Activated CD8-positive, alpha-beta memory T cell treated with anti-CD3 and anti-CD28 coated beads, Interleukin-2, amount 10 ng/mL, durations not matched to agents 7 days and 5 days (primary cell): ENCODE measurements at regions of chr11 and their contacts with region 1.

Region 1: DNA sequence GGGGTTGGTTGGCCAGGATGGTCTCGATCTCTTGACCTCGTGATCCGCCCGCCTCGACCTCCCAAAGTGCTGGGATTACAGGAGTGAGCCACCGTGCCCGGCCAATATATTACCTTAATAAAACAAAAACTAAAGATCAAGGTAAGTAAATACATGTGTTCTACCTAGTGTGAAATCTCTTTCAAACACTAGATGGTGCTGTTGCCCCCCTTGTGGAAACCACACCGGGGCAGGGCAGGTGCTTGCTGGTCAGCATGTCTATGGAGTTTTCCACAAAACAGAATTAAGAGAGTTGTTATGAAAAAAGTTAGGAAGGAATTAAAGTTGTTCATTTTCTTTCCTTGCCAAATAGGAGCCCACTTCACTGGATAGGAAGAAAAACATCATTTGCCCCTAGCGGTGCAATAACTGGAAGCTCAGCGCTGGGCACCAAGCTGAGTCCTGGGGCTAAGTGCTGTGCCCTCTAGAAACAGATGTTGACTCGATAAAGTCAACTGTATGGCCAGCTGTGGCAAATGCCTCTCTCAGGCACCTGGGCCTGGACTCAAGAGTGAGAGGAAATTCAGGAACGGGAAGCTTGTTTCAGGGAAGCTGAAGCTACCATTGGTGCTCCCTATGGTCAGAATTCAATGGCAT is 6.3 kb upstream of the KCNJ5 start:
- DNase-seq: peak; percentile 71
- ATAC-seq: peak; percentile 82
- H3K4me3 Mint-ChIP-seq: no peak overlapping the region
- H3K27ac Mint-ChIP-seq: no peak overlapping the region
- H3K4me1 Mint-ChIP-seq: peaks cover 7% of the 10 kb centered on the region
- H3K27me3 Mint-ChIP-seq: peaks cover 72% of the 10 kb centered on the region

Region 2: GRCh38 chr11:128874427-128874826 is 10.4 kb before region 1 on chr11:
- CTCF ChIA-PET with region 1: interaction called, 25 read pairs
- DNase-seq: no peak
- ATAC-seq: no peak
- H3K4me3 Mint-ChIP-seq: no peak overlapping the region
- H3K27ac Mint-ChIP-seq: no peak overlapping the region
- H3K4me1 Mint-ChIP-seq: no peaks in the 10 kb centered on the region
- H3K27me3 Mint-ChIP-seq: peaks cover 28% of the 10 kb centered on the region

Region 3: GRCh38 chr11:128914216-128915148 is 29.7 kb after region 1 on chr11:
- CTCF ChIA-PET with region 1: interaction called, 10 read pairs
- DNase-seq: no peak
- ATAC-seq: no peak
- H3K4me3 Mint-ChIP-seq: no peak overlapping the region
- H3K27ac Mint-ChIP-seq: no peak overlapping the region
- H3K4me1 Mint-ChIP-seq: peaks cover 4% of the 10 kb centered on the region
- H3K27me3 Mint-ChIP-seq: peaks cover 4% of the 10 kb centered on the region

Region 4: DNA sequence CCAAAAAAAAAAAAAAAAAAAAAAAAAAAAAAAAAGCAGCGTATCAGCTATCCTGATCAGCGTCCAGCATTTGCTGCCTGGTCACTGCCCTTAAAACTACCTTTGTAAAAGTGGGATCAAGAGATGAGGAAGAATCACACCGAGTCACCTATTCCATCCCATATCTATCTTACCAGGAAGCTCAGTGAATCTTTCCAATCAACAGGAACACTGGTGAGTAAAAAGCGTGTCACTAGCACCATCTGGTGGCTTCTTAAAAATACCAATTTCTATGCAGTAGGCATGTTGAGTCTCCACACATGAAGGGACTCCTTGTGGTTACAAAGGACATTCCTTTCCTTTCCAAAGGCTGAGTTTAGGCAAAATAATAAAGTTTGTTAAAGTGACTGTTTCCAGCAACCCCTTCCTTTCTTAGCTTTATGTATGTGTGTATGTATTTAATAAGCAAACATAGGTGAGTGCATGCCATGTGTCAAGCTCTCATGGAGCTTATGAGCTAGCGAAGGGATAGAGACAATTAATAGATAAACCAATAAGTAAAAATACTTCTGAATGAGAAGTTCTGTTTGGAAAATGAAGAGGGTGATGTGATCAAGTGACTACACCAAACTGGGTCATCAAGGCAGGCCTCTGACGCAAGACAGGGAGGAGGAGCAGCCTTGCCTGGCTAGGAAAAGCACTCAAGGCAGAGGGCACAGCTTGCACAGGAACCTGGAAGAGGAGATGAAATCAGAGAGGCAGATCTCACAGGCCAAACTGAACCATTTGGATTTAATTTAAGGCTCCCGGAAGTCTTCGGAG is 71.8 kb after region 1 on chr11:
- CTCF ChIA-PET with region 1: interaction called, 141 read pairs
- DNase-seq: no peak
- ATAC-seq: peak; percentile 66
- H3K4me3 Mint-ChIP-seq: no peak overlapping the region
- H3K27ac Mint-ChIP-seq: no peak overlapping the region
- H3K4me1 Mint-ChIP-seq: peaks cover 2% of the 10 kb centered on the region
- H3K27me3 Mint-ChIP-seq: peaks cover 50% of the 10 kb centered on the region

Region 5: GRCh38 chr11:129331871-129332274 is 447.1 kb after region 1 on chr11:
- CTCF ChIA-PET with region 1: interaction called, 20 read pairs
- DNase-seq: peak; percentile 70
- ATAC-seq: no peak
- H3K4me3 Mint-ChIP-seq: no peak overlapping the region
- H3K27ac Mint-ChIP-seq: no peak overlapping the region
- H3K4me1 Mint-ChIP-seq: peaks cover 4% of the 10 kb centered on the region
- H3K27me3 Mint-ChIP-seq: no peaks in the 10 kb centered on the region